Lower lobe of right lung (tissue), 2 donors: ENCODE measurements at regions of chr3 and their contacts with region 1.

Region 1: DNA sequence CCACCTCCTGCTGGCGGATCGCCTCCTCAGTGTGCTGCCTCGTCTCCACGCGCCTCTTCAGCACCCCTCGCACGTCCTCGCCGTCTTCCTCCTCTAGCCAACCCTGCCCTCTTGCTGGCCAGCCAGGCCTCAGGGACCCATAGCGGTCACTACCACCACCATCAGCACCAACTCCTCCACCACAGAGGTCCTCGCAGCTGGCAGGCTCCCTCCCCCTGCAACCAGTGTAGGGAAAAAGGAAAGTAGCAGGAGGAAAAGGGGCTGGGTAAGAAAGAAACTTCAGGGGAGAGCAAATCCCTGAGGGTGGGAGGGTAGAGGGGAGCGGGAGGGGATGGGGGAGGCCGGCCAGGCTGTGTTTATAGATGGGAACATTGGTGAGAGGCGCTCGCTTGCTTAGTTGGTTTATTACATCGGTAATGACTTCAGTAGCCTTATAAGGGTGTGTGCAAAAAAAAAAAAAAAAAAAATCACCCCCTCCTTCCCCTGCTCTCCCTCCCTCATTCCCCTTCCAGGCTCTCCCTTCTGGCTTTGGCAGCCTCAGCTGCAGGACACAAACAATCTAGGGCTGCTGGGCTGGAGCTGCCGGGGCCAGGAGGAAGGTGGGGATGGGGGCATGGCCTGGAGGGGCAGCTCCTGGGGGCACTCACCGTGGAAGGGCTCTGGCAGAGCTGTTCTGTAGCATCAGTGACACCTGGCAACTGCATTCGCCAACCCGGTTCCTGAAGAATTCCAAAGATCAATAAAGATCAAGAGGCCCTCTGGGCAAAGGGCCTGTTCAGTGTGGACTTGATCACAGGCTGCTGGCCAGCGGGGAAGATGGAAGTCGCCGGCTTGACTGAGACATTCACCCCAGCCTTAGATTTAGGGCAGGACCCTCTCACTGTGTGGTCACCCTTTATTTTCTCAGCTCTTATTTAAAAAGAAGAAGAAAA is 116.2 kb upstream of the HACD2 start:
- DNase-seq: no peak
- ATAC-seq: peak; percentile 38 to 42
- H3K4me3 ChIP-seq: peak overlapping the region; percentile 46
- H3K27ac ChIP-seq: peak overlapping the region; percentile 67
- H3K4me1 ChIP-seq: peaks cover 30% of the 10 kb centered on the region
- H3K27me3 ChIP-seq: no peaks in the 10 kb centered on the region
- CTCF ChIP-seq: no peak

Region 2: DNA sequence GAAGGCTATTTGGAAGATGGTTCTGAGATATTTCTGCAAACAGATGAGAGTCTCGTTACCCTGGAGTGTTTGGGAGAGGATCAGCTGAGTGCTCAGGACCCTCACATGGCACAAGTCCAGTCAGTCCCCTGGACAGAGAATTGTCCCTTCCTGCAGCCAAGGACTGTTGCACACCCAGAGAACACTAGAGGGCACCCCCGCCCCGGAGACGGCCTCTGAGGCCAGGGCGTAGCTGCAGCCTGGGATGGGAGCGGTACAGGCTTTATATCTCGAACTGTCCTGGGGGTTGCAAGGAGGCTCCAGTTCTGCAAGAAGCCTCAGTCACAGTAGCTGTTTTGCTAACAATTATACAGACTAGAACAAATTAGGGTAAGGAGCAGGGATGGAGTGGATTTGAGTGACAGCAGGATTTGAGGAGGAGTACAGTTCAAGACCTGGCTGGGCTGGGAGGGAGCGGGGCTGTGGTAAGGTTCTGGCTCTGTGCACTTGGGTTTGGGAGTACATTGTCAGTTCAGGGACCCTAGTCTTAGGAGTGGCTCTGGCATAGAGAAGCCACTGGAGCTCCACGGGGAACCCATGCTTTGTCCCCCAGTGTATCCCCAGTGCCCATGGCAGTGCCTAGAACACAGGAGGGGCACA is 48.6 kb before region 1 on chr3:
- intact Hi-C with region 1: loop called (anchors 10 kb)
- DNase-seq: peak; percentile 82
- ATAC-seq: peak; percentile 92 to 94
- H3K4me3 ChIP-seq: no peak overlapping the region
- H3K27ac ChIP-seq: peak overlapping the region; percentile 70
- H3K4me1 ChIP-seq: peaks cover 57% of the 10 kb centered on the region
- H3K27me3 ChIP-seq: no peaks in the 10 kb centered on the region
- CTCF ChIP-seq: peak; percentile 92